ENCODE measurements at regions of chrX and their contacts with region 1.

Region 1: DNA sequence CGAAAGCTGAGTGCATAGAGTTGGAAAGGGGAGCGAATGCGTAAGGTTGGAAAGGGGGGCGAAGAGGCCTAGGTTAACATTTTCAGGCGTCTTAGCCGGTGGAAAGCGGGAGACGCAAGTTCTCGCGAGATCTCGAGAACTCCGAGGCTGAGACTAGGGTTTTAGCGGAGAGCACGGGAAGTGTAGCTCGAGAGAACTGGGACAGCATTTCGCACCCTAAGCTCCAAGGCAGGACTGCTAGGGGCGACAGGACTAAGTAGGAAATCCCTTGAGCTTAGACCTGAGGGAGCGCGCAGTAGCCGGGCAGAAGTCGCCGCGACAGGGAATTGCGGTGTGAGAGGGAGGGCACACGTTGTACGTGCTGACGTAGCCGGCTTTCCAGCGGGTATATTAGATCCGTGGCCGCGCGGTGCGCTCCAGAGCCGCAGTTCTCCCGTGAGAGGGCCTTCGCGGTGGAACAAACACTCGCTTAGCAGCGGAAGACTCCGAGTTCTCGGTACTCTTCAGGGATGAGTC is at the start of gene DDX3X:
- DNase-seq: peak; percentile 81
- ATAC-seq: peak; percentile 60
- H3K4me3 ChIP-seq: peak within 1 kb of the TSS; percentile 81 to 86
- H3K27ac ChIP-seq: peak within 1 kb of the TSS; percentile 96
- H3K4me1 ChIP-seq: peaks cover 10 to 44% of the 10 kb centered on the region in 2 experiments; a peak in 3 of 4 replicates
- H3K27me3 ChIP-seq: no peaks in the 10 kb centered on the region
- CTCF ChIP-seq: no peak
- POLR2A ChIP-seq: peak; percentile 99
- RAD21 ChIP-seq: no peak
- total RNA-seq, gene DDX3X: 253 TPM

Region 2: GRCh38 chrX:41275661-41276609 is 57.9 kb before region 1 on chrX:
- CTCF ChIA-PET with region 1: no interaction called
- POLR2A ChIA-PET with region 1: interaction called, 3 read pairs
- RAD21 ChIA-PET with region 1: interaction called in 1 of 2 experiments, 6 read pairs
- intact Hi-C with region 1: loop called (anchors 2 kb)
- DNase-seq: no peak
- ATAC-seq: peak; percentile 90
- H3K4me3 ChIP-seq: peak overlapping the region; percentile 48 to 62
- H3K27ac ChIP-seq: peak overlapping the region; percentile 56; the same call in 1 of the 2 replicates
- H3K4me1 ChIP-seq: peaks cover 0 to 7% of the 10 kb centered on the region in 2 experiments; a peak in 2 of 4 replicates
- H3K27me3 ChIP-seq: no peaks in the 10 kb centered on the region
- CTCF ChIP-seq: peak; percentile 16 to 38 (median 37); a peak in 3 of 6 replicates
- POLR2A ChIP-seq: no peak
- RAD21 ChIP-seq: peak; percentile 76

Region 3: GRCh38 chrX:41384041-41384705 is 50.4 kb after region 1 on chrX:
- CTCF ChIA-PET with region 1: no interaction called
- POLR2A ChIA-PET with region 1: interaction called, 8 read pairs
- RAD21 ChIA-PET with region 1: no interaction called
- intact Hi-C with region 1: loop called (anchors 5 kb)
- DNase-seq: peak; percentile 51
- ATAC-seq: peak; percentile 60
- H3K4me3 ChIP-seq: peak overlapping the region in 1 of 2 experiments; percentile 25; a peak in 1 of 4 replicates
- H3K27ac ChIP-seq: peak overlapping the region; percentile 77
- H3K4me1 ChIP-seq: peaks cover 16 to 31% of the 10 kb centered on the region in 2 experiments
- H3K27me3 ChIP-seq: no peaks in the 10 kb centered on the region
- CTCF ChIP-seq: no peak
- POLR2A ChIP-seq: no peak
- RAD21 ChIP-seq: no peak

Region 4: GRCh38 chrX:41412261-41413081 is 78.7 kb after region 1 on chrX:
- CTCF ChIA-PET with region 1: no interaction called
- POLR2A ChIA-PET with region 1: no interaction called
- RAD21 ChIA-PET with region 1: no interaction called
- intact Hi-C with region 1: no loop called
- DNase-seq: no peak
- ATAC-seq: no peak
- H3K4me3 ChIP-seq: no peak overlapping the region
- H3K27ac ChIP-seq: no peak overlapping the region
- H3K4me1 ChIP-seq: peaks cover 0 to 6% of the 10 kb centered on the region in 2 experiments; a peak in 1 of 4 replicates
- H3K27me3 ChIP-seq: no peaks in the 10 kb centered on the region
- CTCF ChIP-seq: no peak
- POLR2A ChIP-seq: no peak
- RAD21 ChIP-seq: no peak

Region 5: GRCh38 chrX:41441934-41442823 is 108.4 kb after region 1 on chrX:
- CTCF ChIA-PET with region 1: no interaction called
- POLR2A ChIA-PET with region 1: interaction called, 3 read pairs
- RAD21 ChIA-PET with region 1: no interaction called
- intact Hi-C with region 1: loop called (anchors 5 kb)
- DNase-seq: peak; percentile 64
- ATAC-seq: peak; percentile 89
- H3K4me3 ChIP-seq: peak overlapping the region; percentile 31 to 51
- H3K27ac ChIP-seq: peak overlapping the region; percentile 64
- H3K4me1 ChIP-seq: peaks cover 20% of the 10 kb centered on the region in 2 experiments; a peak in 3 of 4 replicates
- H3K27me3 ChIP-seq: no peaks in the 10 kb centered on the region
- CTCF ChIP-seq: peak; percentile 40 to 59 (median 47); a peak in 5 of 6 replicates
- POLR2A ChIP-seq: no peak
- RAD21 ChIP-seq: peak; percentile 75

Measured in HCT116 (cell line).